Activated T-helper 2 cell treated with anti-CD3 and anti-CD28 coated beads, Interferon-gamma antibody, Interleukin-2, Interleukin-4, amounts not matched to agents 10 μg/mL and 5 μg/mL and 100 μg/mL, durations not matched to agents 14 hours and 24 hours and 36 hours (primary cell): ENCODE measurements at regions of chr7 and their contacts with region 1.

Region 1: GRCh38 chr7:50534690-50535290 is 30.4 kb downstream of the DDC start:
- DNase-seq: no peak
- H3K4me3 Mint-ChIP-seq: no peak overlapping the region
- H3K27ac Mint-ChIP-seq: no peak overlapping the region
- H3K4me1 Mint-ChIP-seq: peaks cover 31% of the 10 kb centered on the region
- H3K27me3 Mint-ChIP-seq: peaks cover 1% of the 10 kb centered on the region

Region 2: GRCh38 chr7:50497068-50497642 is 37.6 kb before region 1 on chr7:
- intact Hi-C with region 1: loop called (anchors 2 kb)
- DNase-seq: no peak
- H3K4me3 Mint-ChIP-seq: no peak overlapping the region
- H3K27ac Mint-ChIP-seq: peak overlapping the region; percentile 24
- H3K4me1 Mint-ChIP-seq: peaks cover 17% of the 10 kb centered on the region
- H3K27me3 Mint-ChIP-seq: peaks cover 15% of the 10 kb centered on the region